ENCODE measurements at regions of chr2 and their contacts with region 1.

Region 1: DNA sequence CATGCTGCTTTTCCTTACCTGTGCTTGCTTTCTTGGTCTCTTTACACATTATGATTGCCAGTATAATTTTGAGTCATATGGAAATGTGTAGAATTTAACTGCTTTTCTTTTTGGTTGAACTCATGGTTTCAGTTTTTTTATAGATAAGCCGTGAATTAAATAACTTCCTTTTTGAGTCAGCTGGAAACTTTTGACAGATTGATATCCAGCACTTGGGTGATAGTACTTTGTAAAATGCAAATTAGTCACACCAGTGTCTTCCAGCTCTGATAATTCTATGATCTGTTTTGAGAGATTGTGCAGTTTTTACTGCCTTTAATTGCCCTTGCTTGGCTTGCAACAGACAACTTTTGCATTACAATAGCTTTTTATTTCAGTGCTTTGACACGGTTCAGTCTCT is 86.4 kb downstream of the NCOA1 start:
- DNase-seq: no peak
- ATAC-seq: no peak
- H3K4me3 ChIP-seq: no peak overlapping the region
- H3K27ac ChIP-seq: no peak overlapping the region
- H3K4me1 ChIP-seq: peaks cover 2% of the 10 kb centered on the region in 2 donors
- H3K27me3 ChIP-seq: no peaks in the 10 kb centered on the region

Region 2: GRCh38 chr2:24075915-24076848 is 501.3 kb before region 1 on chr2 and contains the start of gene SF3B6:
- intact Hi-C with region 1: no loop called
- DNase-seq: peak; percentile 99
- ATAC-seq: peak; percentile 97
- H3K4me3 ChIP-seq: peak within 1 kb of the TSS; percentile 65 to 94
- H3K27ac ChIP-seq: peak within 1 kb of the TSS; percentile 20 to 90
- H3K4me1 ChIP-seq: no peaks in the 10 kb centered on the region
- H3K27me3 ChIP-seq: no peaks in the 10 kb centered on the region
- total RNA-seq, gene SF3B6: 54.4 to 60.5 TPM

Region 3: DNA sequence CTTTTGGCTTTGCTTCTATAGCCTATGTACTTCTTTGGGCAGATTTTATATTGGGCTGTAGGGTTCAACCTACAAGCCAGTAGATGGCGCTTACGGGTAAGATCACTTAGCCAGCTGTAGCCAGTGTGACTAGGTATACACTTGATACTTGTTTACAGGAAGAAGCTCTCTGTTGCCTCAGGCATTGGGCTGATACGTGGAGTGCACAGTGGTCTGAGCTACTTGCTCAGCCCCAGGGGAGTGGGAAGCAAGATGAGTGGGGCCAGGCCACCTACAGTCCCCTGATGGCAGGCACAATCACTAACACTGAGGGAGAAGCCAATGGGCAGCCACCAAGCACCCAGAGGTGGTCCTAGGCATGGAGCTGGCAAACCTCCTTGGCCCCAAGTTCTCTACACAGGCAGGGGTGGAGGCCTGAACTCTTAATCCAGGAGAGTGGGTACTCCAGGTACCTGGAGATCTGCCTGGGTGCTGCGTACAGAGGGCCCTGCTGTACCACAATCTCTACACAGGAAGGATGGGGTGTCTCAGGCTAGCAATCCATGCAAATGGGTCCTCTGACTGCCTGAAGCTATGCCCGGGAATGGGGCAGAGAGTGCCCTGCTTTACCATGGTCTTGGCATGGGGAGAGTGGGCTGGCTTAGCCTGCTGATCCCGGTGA is 35.8 kb after region 1 on chr2:
- intact Hi-C with region 1: loop called in 1 of 2 experiments (anchors 5 kb)
- DNase-seq: no peak
- ATAC-seq: no peak
- H3K4me3 ChIP-seq: no peak overlapping the region
- H3K27ac ChIP-seq: no peak overlapping the region
- H3K4me1 ChIP-seq: peaks cover 0 to 3% of the 10 kb centered on the region in 2 donors
- H3K27me3 ChIP-seq: no peaks in the 10 kb centered on the region